A549 (cell line): ENCODE measurements at regions of chr2 and their contacts with region 1.

Region 1: GRCh38 chr2:55168221-55169154 is 63.6 kb downstream of the CLHC1 start:
- DNase-seq: peak; percentile 69 to 77
- ATAC-seq: peak; percentile 81 to 84
- H3K4me3 ChIP-seq: no peak overlapping the region
- H3K27ac ChIP-seq: peak overlapping the region; percentile 12 to 59; a peak in 4 of 6 replicates
- H3K4me1 ChIP-seq: peaks cover 38% of the 10 kb centered on the region
- CTCF ChIP-seq: peak; percentile 98
- EP300 ChIP-seq: no peak
- POLR2A ChIP-seq: no peak
- RAD21 ChIP-seq: peak; percentile 98 to 99

Region 2: DNA sequence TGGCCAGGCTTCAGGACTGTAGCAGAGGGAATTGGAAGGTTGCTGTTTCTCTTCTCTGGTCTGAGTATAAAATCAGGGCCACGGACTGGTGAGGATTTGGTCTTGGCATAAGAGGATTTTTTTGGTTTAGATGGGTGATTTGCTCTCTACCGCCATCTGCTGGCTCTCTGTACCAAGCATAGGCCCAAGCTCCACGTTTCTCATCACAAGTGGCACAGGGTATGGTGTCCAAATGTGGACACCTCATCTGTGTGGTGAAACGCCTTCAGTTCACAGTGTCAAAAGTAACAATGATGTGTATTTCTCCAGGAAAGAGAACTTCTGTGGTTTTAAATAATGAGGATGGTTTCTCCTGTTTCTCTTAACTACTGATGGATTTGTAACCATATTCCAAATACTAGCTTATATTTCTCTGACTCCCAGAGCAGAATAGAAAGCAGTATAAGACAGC is 329.9 kb before region 1 on chr2:
- CTCF ChIA-PET with region 1: interaction called, 13 read pairs
- POLR2A ChIA-PET with region 1: no interaction called
- DNase-seq: peak; percentile 69 to 75
- ATAC-seq: peak; percentile 89 to 95
- H3K4me3 ChIP-seq: no peak overlapping the region
- H3K27ac ChIP-seq: no peak overlapping the region
- H3K4me1 ChIP-seq: 0 out of 3 replicates have a peak, but pooled peaks cover 2% of the 10 kb centered on the region
- CTCF ChIP-seq: peak; percentile 96
- EP300 ChIP-seq: no peak
- POLR2A ChIP-seq: no peak
- RAD21 ChIP-seq: peak; percentile 79

Region 3: DNA sequence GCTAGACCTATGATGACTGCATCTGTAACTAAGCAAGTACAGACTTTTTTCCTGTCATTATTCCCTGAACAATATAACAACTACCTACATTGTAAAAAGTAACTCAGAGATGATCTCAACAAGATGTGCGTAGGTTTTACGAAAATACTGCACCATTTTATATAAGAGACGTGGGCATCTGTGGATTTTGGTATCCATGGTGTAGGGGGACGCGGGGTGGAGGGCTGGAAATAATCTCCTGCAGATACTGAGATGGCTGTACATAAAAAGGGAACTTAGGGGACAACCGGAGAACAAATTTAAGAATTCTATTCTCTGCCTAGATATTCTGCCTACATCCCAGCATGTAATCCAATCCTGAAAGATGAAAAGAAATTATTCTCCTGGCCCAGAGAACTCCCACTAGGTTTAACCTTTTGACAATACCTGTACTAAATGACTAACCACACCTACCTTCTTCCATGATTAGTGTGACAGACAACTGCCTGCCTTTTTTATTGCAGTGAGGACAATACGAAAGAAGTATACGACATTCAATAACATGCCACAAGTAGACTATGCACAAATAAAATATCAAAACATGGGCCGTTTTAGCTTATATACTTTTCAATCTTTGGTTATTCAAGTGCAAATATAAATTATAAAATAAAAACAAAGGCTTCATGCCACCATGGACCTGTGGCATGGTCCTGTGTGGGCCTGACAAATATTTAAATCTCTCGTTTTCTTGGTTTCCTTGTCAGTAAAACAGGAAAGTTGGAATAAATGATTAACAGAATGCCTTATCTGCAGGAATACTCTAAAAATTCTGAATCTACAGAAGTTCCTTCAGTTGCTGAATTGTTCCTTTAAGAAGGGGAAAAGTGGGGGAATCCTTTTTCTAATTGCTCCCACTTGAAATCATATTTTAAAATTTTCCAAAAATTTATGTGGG is 164.5 kb before region 1 on chr2:
- CTCF ChIA-PET with region 1: interaction called, 351 read pairs
- POLR2A ChIA-PET with region 1: no interaction called
- DNase-seq: no peak
- ATAC-seq: no peak
- H3K4me3 ChIP-seq: no peak overlapping the region
- H3K27ac ChIP-seq: no peak overlapping the region
- H3K4me1 ChIP-seq: peaks cover 87% of the 10 kb centered on the region
- CTCF ChIP-seq: no peak
- EP300 ChIP-seq: no peak
- POLR2A ChIP-seq: no peak
- RAD21 ChIP-seq: no peak

Region 4: GRCh38 chr2:55050133-55050994 is 118.1 kb before region 1 on chr2 and contains the start of gene RTN4:
- CTCF ChIA-PET with region 1: interaction called, 198 read pairs
- POLR2A ChIA-PET with region 1: interaction called, 34 read pairs
- DNase-seq: peak; percentile 97 to 100
- ATAC-seq: peak; percentile 77 to 86
- H3K4me3 ChIP-seq: peak within 1 kb of the TSS; percentile 95
- H3K27ac ChIP-seq: peak within 1 kb of the TSS; percentile 94 to 97
- H3K4me1 ChIP-seq: peaks cover 38% of the 10 kb centered on the region
- CTCF ChIP-seq: no peak
- EP300 ChIP-seq: no peak; a peak in 1 of 5 replicates
- POLR2A ChIP-seq: peak; percentile 99
- RAD21 ChIP-seq: 0 out of 5 replicates have a peak, but pooled peaks of 1 of the 2 experiments have one; percentile 16
- polyA plus RNA-seq, gene RTN4: 302 and 336 TPM in 2 replicates

Region 5: DNA sequence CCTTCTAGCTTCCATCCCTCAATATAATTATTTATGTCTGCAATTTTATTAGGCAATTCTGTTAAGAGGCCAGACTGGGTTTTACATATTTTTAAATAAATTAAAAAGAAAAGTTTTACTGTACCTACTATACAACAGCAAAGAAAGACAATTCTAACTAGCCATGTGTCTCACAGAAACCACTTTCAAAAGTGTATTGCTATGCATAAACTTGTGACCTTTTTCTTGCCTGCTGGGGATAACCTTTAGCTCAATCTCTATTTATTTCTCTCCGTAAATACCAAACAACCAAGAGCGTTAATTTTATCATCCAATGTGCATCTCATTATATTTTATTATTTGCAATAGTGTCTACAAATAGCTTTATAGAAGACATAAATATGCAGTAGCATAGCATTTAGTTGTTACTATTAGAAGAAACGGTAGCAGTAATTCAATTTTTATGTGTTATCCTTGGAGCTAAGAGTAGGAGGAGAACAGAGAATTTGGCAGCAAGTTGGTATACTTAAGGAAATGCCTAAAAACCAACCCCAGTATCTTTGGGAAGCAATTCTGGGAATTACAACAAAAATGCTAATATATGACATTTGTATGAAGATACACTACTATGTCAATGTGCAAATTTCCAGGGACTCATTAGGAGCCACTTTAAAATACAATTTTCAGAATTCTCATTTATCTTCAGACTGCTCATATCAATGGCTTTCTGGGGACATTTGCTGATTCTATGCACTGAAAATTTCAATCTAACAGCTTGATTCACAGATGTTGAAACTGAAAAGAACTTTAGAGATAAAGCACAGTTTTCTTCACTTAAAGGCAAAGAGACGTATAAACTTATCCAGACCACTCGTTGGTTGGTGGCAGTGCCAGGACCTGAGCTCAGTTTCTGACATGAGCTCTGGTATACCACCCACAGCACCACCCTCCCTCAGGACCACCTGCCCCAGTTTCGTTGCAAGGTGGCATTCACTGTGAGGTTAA is 95.2 kb before region 1 on chr2:
- CTCF ChIA-PET with region 1: interaction called, 13 read pairs
- POLR2A ChIA-PET with region 1: no interaction called
- DNase-seq: no peak
- ATAC-seq: no peak
- H3K4me3 ChIP-seq: no peak overlapping the region
- H3K27ac ChIP-seq: no peak overlapping the region
- H3K4me1 ChIP-seq: no peaks in the 10 kb centered on the region
- CTCF ChIP-seq: no peak
- EP300 ChIP-seq: no peak
- POLR2A ChIP-seq: no peak
- RAD21 ChIP-seq: no peak

Region 6: DNA sequence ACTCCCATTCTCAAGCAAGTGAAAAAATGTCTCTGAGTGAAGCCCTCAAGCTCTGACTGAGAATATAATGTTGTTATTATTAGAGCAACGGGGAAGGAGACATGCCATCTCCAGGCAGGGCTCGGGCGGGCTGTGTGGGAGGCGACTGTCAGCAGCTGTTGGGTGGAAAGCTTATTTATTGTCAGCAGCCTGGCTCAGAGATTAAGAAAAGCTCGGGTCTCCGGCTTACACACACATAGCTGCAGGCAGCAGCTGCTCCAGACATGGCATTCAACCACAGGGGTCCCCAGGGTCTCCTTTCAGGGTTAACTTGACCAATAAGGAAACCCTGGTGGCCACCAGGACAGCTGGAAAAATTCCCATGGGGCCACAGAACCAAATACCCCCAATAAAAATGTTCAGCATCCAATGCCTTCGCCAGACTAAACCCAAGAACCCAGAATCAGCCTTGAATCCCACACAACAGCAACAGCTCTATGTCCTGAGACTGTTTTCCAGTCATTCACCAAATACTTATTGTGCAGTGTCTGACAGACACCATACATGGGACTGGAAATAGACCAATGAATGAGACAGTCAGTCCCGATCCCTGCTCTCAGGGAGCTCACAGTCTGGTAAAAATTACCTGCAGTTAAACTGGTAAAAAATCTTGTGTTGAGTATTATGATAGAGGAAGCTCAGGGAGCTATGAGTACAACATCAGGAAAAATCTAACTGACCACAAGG is 47.7 kb before region 1 on chr2:
- CTCF ChIA-PET with region 1: interaction called, 148 read pairs
- POLR2A ChIA-PET with region 1: no interaction called
- DNase-seq: no peak
- ATAC-seq: 0 out of 6 replicates have a peak, but pooled peaks of 1 of the 2 experiments have one; percentile 18
- H3K4me3 ChIP-seq: no peak overlapping the region
- H3K27ac ChIP-seq: no peak overlapping the region; a peak in 1 of 6 replicates
- H3K4me1 ChIP-seq: peaks cover 16% of the 10 kb centered on the region
- CTCF ChIP-seq: no peak
- EP300 ChIP-seq: no peak
- POLR2A ChIP-seq: no peak
- RAD21 ChIP-seq: no peak

Region 7: GRCh38 chr2:55511508-55512124 is 343.1 kb after region 1 on chr2:
- CTCF ChIA-PET with region 1: no interaction called
- POLR2A ChIA-PET with region 1: no interaction called
- DNase-seq: peak; percentile 48 to 78
- ATAC-seq: peak; percentile 96 to 97
- H3K4me3 ChIP-seq: no peak overlapping the region
- H3K27ac ChIP-seq: no peak overlapping the region
- H3K4me1 ChIP-seq: no peaks in the 10 kb centered on the region; the same call in 2 of the 3 replicates
- CTCF ChIP-seq: peak; percentile 79
- EP300 ChIP-seq: no peak
- POLR2A ChIP-seq: no peak
- RAD21 ChIP-seq: peak; percentile 69 to 72